ENCODE measurements at regions of chr17 and their contacts with region 1.

Region 1: GRCh38 chr17:41864836-41865595 is at the start of gene KLHL11:
- DNase-seq: peak; percentile 76 to 97 (median 92)

Region 2: GRCh38 chr17:41918314-41919164 is 53.5 kb after region 1 on chr17 and contains the start of gene ACLY:
- intact Hi-C with region 1: loop called (anchors 10 kb)
- DNase-seq: peak; percentile 93 to 99 (median 98)

Region 3: GRCh38 chr17:42010898-42011516 is 146.0 kb after region 1 on chr17:
- intact Hi-C with region 1: no loop called
- DNase-seq: peak in 3 of 42 donors; percentile 42 to 60 (median 59)

Measured in head of caudate nucleus (tissue), 42 donors.